Adrenal gland (tissue), 19 donors: ENCODE measurements at regions of chr11 and their contacts with region 1.

Region 1: DNA sequence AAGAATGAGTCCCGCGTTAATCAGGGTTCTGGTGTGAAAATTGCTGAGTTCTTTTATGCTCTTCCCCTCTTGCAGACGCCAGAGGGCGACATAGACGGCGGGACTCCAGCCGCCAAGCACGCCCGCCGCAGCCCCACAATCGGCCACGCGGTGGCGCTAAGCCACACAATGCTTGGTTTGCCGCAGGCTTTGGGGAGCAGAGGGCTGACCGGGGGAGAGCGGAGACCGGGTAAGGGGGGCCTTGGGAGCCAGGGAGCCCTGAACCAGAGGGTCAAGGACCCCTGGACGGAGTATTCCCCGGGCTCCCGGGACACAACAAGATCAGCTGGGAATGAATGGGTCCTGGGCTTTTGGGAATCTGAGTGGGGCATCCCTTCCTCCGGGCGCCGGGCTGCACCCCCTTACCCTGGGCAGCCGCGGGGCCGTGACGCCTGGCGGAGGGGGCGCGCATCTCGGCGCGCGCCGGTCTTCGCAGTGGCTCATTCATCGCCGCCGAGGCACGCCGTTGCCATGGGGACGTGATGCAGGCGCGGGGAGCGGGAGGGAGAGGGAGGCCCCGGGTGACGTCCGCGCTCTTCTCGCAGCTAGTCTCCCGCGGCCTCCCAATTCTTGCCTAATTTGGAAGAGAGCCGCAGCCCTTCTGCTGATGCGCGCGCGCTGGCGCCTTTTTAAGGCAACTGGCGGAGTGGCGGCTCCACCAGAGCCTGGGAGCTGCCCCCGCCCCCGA is 12.2 kb upstream of the NPAS4 start:
- DNase-seq: peak; percentile 83 to 93 (median 87)
- H3K4me3 ChIP-seq: peak overlapping the region in 1 of 4 donors; percentile 20
- H3K27ac ChIP-seq: peak overlapping the region in 1 of 5 donors; percentile 40
- H3K4me1 ChIP-seq: peaks cover 0 to 6% of the 10 kb centered on the region in 2 donors
- H3K27me3 ChIP-seq: peaks cover 6% of the 10 kb centered on the region
- CTCF ChIP-seq: peak; percentile 99 to 100 (median 100)
- POLR2A ChIP-seq: no peak

Region 2: GRCh38 chr11:66288671-66289547 is 119.7 kb before region 1 on chr11 and contains the start of gene YIF1A:
- intact Hi-C with region 1: no loop called
- DNase-seq: peak; percentile 98 to 100 (median 99)
- H3K4me3 ChIP-seq: peak within 1 kb of the TSS; percentile 33 to 74 (median 66)
- H3K27ac ChIP-seq: peak within 1 kb of the TSS; percentile 78 to 93 (median 90)
- H3K4me1 ChIP-seq: peaks cover 12 to 40% of the 10 kb centered on the region in 2 donors
- H3K27me3 ChIP-seq: peaks cover 8% of the 10 kb centered on the region
- CTCF ChIP-seq: peak in 1 of 6 experiments; percentile 8
- POLR2A ChIP-seq: peak; percentile 88 to 91
- total RNA-seq, gene YIF1A: 69.7 to 154 (median 93.1) TPM

Region 3: GRCh38 chr11:66429983-66430602 is 21.4 kb after region 1 on chr11:
- intact Hi-C with region 1: loop called in 1 of 2 experiments (anchors 2 kb)
- DNase-seq: peak; percentile 68 to 92 (median 86)
- H3K4me3 ChIP-seq: no peak overlapping the region
- H3K27ac ChIP-seq: no peak overlapping the region
- H3K4me1 ChIP-seq: no peaks in the 10 kb centered on the region
- H3K27me3 ChIP-seq: peaks cover 4% of the 10 kb centered on the region
- CTCF ChIP-seq: peak; percentile 79 to 91 (median 85)
- POLR2A ChIP-seq: no peak

Region 4: GRCh38 chr11:66677599-66678375 is 269.1 kb after region 1 on chr11 and contains the start of gene RBM4B:
- intact Hi-C with region 1: loop called in 1 of 2 experiments (anchors 5 kb)
- DNase-seq: peak; percentile 96 to 99 (median 98)
- H3K4me3 ChIP-seq: peak within 1 kb of the TSS in 3 of 4 donors; percentile 72 to 97 (median 91)
- H3K27ac ChIP-seq: peak within 1 kb of the TSS; percentile 86 to 97 (median 89)
- H3K4me1 ChIP-seq: peaks cover 9 to 33% of the 10 kb centered on the region in 2 donors
- H3K27me3 ChIP-seq: no peaks in the 10 kb centered on the region
- CTCF ChIP-seq: no peak
- POLR2A ChIP-seq: peak; percentile 90 to 91
- total RNA-seq, gene RBM4B: 9.9 to 40.3 (median 18.9) TPM